ENCODE measurements at regions of chr6 and their contacts with region 1.

Region 1: DNA sequence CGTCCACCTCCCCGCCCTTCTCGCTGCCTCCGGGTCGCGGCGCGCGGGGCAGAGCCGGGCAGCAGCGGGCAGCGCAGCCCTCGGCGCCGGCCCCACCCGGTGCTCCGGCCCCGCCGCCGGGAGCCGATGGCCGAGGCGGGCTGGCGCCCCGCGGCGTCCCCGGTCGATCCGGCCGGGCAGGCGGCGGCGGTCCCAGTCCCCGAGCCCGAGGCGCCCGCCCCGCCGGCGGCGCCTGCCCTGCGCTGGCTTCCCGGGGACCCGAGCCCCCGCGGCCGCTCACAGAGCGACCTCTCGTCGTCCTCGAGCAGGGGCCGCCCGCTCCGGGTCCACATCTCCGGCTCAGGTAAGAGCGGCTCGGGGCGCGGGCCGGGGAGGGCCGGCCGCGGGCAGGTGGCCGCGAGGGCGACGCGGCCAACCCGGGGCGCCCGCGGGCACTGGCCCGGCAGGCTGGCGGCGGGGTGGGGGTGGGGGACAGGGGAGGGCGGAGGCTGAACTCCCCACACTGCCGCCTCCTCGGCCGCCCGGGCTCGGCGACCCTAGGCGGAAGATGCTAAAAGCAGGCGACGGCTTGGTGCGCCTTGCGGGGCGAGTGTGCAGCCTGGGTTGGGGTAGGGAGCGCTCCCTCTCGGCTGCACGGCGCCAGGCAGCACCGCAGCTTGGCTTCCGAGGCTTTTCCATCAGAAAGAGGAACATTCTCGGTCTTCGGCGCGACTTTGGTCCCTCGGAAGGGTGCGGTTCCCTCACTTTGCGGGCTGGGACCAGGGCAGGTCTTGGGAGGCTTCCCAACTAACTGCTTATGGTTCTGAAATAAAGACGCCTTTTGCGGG is 25.6 kb upstream of the FUCA2 start:
- DNase-seq: peak; percentile 50
- H3K4me3 Mint-ChIP-seq: peak overlapping the region; percentile 88
- H3K27ac Mint-ChIP-seq: peak overlapping the region; percentile 76
- H3K4me1 Mint-ChIP-seq: peaks cover 32% of the 10 kb centered on the region
- H3K27me3 Mint-ChIP-seq: no peaks in the 10 kb centered on the region

Region 2: GRCh38 chr6:143549221-143549941 is 12.3 kb after region 1 on chr6:
- intact Hi-C with region 1: loop called (anchors 1 kb)
- DNase-seq: no peak
- H3K4me3 Mint-ChIP-seq: peak overlapping the region; percentile 40
- H3K27ac Mint-ChIP-seq: peak overlapping the region; percentile 74
- H3K4me1 Mint-ChIP-seq: peaks cover 88% of the 10 kb centered on the region
- H3K27me3 Mint-ChIP-seq: no peaks in the 10 kb centered on the region

Region 3: DNA sequence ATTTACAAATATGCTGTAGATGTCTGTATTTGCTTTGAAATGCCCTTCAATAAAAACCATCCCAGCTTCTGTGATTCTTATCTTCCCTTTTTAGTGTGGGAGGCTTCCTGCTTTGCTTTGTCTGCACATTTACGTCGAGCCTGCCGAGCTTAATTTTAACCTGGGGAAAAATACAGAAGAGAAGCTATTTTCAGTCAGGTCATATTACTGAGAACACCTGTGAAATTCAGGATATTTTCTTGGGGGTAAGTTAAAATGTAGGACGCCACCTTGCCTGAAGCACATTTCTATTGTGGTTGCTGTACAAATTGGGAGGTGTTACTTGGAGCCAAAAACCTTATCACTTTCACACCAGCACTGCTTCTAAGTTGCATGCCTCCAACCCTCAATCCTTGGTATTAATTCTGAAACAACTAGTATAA is 18.0 kb after region 1 on chr6:
- intact Hi-C with region 1: loop called (anchors 1 kb)
- DNase-seq: no peak
- H3K4me3 Mint-ChIP-seq: peak overlapping the region; percentile 63
- H3K27ac Mint-ChIP-seq: peak overlapping the region; percentile 76
- H3K4me1 Mint-ChIP-seq: peaks cover 85% of the 10 kb centered on the region
- H3K27me3 Mint-ChIP-seq: no peaks in the 10 kb centered on the region